GM10248 (cell line): ENCODE measurements at regions of chr12 and their contacts with region 1.

Region 1: GRCh38 chr12:94101738-94102660 is 46.4 kb upstream of the PLXNC1 start:
- DNase-seq: peak; percentile 81
- CTCF ChIP-seq: peak; percentile 95

Region 2: DNA sequence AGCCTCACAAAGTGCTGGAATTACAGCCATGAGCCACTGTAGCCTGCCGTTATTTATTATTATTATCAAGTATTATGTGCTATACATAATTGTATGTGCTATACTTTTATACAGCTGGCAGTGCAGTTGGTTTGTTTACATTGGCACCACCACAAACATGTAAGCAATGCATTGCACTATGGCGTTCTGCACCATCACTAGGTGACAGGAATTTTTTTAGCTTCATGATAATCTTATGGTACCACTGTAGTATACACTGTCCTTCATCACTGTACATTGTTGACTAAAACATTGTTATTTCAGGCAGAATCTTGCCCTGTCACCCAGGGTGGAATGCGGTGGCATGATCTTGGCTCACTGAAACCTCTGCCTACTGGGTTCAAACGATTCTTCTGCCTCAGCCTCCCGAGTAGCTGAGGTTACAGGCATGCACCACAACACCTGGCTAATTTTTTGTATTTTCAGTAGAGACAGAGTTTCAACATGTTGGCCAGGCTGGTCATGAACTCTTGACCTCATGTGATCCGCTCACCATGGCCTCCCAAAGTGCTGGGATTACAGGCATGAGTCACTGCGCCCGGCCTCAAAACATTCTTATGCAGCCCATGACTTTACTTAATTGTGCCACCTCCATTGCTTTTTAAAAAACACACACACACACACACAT is 617.6 kb before region 1 on chr12:
- CTCF ChIA-PET with region 1: interaction called, 18 read pairs
- POLR2A ChIA-PET with region 1: no interaction called
- DNase-seq: no peak
- CTCF ChIP-seq: no peak

Region 3: GRCh38 chr12:93502802-93503623 is 599.0 kb before region 1 on chr12:
- CTCF ChIA-PET with region 1: interaction called, 151 read pairs
- POLR2A ChIA-PET with region 1: no interaction called
- DNase-seq: no peak
- CTCF ChIP-seq: peak; percentile 65

Region 4: GRCh38 chr12:93526786-93527428 is 575.1 kb before region 1 on chr12:
- CTCF ChIA-PET with region 1: interaction called, 45 read pairs
- POLR2A ChIA-PET with region 1: no interaction called
- DNase-seq: no peak
- CTCF ChIP-seq: no peak

Region 5: DNA sequence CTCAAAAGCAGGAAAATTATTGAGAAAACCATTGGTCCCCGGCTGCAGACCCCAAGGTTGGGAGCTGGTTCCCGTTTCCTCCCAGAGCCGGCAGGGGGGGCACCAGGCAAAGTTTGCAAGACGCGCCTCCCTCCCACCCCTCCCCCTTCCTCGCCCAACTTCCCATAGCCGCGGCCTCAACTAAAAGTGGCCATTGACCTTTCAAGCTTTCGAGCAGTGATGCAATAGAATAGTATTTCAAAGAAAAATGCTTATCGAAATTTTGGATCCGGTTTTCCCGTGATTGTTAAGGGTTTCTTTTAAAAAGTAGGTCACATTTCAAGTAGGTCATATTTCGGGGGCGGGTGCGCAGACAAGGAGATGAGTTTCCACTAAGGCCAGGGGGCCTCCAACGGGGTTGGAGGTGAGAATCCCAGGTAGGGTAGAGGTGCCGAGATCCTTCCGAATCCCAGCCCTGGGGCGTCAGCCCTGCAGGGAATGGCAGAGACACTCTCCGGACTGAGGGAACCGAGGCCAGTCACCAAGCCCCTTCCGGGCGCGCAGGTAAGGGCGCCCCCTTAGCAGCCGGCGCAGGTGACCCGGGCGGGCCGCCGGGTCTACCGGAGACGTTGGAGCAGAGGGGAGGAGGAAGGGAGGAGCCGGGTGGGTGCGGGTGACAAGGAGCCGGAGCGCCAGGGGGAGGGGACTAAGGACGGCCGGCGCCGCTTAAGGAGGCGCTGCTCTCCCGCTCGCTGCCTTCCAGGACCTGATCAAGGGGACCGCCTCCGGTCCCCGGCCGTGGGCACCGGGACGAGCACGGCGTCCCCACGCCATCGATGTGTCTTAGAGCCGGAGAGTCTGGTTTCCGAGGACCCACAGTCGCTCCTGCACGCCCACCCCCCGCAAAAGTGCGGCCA is 532.1 kb before region 1 on chr12:
- CTCF ChIA-PET with region 1: interaction called, 123 read pairs
- POLR2A ChIA-PET with region 1: no interaction called
- DNase-seq: peak; percentile 86
- CTCF ChIP-seq: peak; percentile 76

Region 6: DNA sequence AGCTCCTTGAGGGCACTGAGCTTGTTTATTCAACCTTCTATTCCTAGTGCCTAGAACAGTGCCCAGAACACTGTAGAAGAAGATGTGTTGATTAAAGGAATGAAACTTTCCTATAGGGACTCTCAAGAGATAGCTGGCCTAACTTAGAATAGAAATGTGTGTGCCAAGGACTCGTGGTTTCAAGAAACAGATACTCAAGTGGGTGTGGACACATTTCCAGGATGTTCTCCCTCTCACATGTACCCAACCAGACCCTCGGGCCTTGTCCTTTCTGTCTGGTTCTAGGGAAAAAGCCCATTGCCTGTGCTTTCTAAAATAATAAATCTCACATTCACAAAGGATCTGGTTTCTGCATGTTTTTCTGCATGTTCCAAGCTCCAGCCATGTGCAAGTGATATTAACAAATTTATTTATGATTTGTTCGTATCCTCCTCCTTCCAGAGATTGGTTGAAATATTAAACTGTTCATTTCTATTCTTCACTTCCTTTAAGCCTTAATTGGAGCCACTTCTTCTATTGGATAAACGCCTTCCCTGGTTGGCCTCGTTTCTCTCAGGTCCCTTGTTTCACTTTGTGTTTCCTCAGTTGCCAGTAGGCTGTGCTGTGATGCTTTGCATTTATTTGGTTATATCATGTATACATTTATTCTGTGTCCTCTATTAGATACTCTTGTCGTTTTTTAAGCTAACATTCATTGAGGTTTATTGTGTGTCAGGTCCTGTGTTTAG is 335.0 kb before region 1 on chr12:
- CTCF ChIA-PET with region 1: interaction called, 51 read pairs
- POLR2A ChIA-PET with region 1: no interaction called
- DNase-seq: peak; percentile 37
- CTCF ChIP-seq: peak; percentile 57

Region 7: GRCh38 chr12:94126067-94126466 is 24.1 kb after region 1 on chr12:
- CTCF ChIA-PET with region 1: interaction called, 22 read pairs
- POLR2A ChIA-PET with region 1: no interaction called
- DNase-seq: no peak
- CTCF ChIP-seq: no peak